ENCODE measurements at regions of chr3 and their contacts with region 1.

Region 1: GRCh38 chr3:157311633-157312375 is 124.8 kb upstream of the PTX3 start:
- DNase-seq: peak; percentile 93
- ATAC-seq: peak; percentile 90
- H3K4me3 ChIP-seq: no peak overlapping the region
- H3K27ac ChIP-seq: peak overlapping the region; percentile 49
- H3K4me1 ChIP-seq: peaks cover 25% of the 10 kb centered on the region
- H3K27me3 ChIP-seq: no peaks in the 10 kb centered on the region
- CTCF ChIP-seq: no peak

Region 2: GRCh38 chr3:157274644-157275137 is 37.1 kb before region 1 on chr3:
- CTCF ChIA-PET with region 1: no interaction called
- POLR2A ChIA-PET with region 1: no interaction called
- intact Hi-C with region 1: loop called (anchors 1 kb)
- DNase-seq: peak; percentile 83
- ATAC-seq: peak; percentile 93
- H3K4me3 ChIP-seq: no peak overlapping the region
- H3K27ac ChIP-seq: peak overlapping the region; percentile 38
- H3K4me1 ChIP-seq: peaks cover 10% of the 10 kb centered on the region
- H3K27me3 ChIP-seq: no peaks in the 10 kb centered on the region
- CTCF ChIP-seq: no peak

Region 3: GRCh38 chr3:157436583-157437291 is 124.9 kb after region 1 on chr3 and contains the start of gene PTX3:
- CTCF ChIA-PET with region 1: no interaction called
- POLR2A ChIA-PET with region 1: no interaction called
- intact Hi-C with region 1: loop called (anchors 5 kb)
- DNase-seq: peak; percentile 90
- ATAC-seq: peak; percentile 51
- H3K4me3 ChIP-seq: peak within 1 kb of the TSS; percentile 82
- H3K27ac ChIP-seq: peak within 1 kb of the TSS; percentile 68
- H3K4me1 ChIP-seq: peaks cover 16% of the 10 kb centered on the region
- H3K27me3 ChIP-seq: no peaks in the 10 kb centered on the region
- CTCF ChIP-seq: no peak
- total RNA-seq, gene PTX3: 24.4 and 27.3 TPM in 2 replicates